Activated CD8-positive, alpha-beta memory T cell treated with anti-CD3 and anti-CD28 coated beads, Interleukin-2, amount 10 ng/mL, durations not matched to agents 7 days and 5 days (primary cell): ENCODE measurements at regions of chr22 and their contacts with region 1.

Region 1: GRCh38 chr22:30386960-30387827 is at the start of gene RNF215:
- DNase-seq: peak; percentile 82
- ATAC-seq: peak; percentile 91
- H3K4me3 Mint-ChIP-seq: peak within 1 kb of the TSS; percentile 76
- H3K27ac Mint-ChIP-seq: peak within 1 kb of the TSS; percentile 78
- H3K4me1 Mint-ChIP-seq: peaks cover 22% of the 10 kb centered on the region
- H3K27me3 Mint-ChIP-seq: no peaks in the 10 kb centered on the region
- total RNA-seq, gene RNF215: 8.5 to 10.5 TPM

Region 2: DNA sequence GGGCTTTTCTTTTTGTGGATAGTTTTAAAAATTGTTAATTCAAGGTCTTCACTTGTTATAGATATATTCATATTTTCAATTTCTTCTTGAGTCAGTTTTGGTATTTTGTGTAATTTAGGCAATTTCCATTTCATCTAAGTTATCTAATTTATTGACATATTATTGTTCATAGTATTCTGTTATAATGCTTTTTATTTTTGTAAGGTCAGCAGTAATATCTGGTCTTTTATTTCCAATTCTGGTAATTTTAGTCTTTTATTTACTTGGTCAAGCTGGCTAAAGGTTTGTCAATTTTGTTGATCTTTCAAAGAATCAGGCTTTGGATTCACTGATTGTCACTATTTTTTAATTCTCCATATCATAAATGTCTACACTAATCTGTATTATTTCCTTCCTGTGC is 246.8 kb before region 1 on chr22:
- CTCF ChIA-PET with region 1: no interaction called
- DNase-seq: no peak
- ATAC-seq: no peak
- H3K4me3 Mint-ChIP-seq: no peak overlapping the region
- H3K27ac Mint-ChIP-seq: no peak overlapping the region
- H3K4me1 Mint-ChIP-seq: no peaks in the 10 kb centered on the region
- H3K27me3 Mint-ChIP-seq: peaks cover 32% of the 10 kb centered on the region

Region 3: DNA sequence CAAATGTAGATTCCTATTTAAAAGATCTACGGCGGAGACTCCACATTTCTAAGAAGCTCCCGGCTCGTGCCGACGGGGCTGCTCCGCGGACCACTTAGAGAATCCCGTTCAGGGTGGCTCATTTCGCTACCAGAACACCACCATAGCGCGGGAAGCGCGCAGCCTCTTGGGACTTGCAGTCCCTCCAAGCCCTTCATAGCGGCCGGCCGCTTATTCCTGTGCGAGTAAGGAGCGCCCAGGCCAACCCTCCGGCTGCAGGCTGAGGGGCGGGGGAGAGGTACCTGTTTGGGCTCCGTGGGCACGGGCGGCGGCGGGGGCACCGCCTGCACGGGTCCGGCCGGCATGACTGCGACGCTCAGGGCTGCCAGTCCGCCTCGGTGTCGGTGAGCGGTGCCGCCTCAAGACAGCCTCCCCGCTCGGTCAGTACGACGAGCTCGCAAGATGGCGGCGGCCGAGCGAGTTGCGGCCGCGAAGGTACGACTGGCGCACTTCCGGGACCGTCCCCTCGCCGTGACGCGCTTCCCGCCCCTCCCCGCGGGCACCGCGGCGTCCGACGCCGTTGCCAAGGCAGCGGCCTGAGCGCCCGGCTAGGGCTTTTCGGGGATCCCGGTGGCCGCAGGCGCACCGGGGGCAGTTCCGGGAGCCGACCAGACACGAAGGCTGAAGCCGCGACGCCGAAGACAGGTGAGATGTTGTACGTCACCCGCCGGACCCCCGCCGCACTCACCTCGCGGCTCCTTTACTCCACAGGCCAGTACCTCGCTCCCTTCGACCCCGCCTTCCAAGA is 30.6 kb before region 1 on chr22 and contains the starts of genes CCDC157 and SF3A1:
- CTCF ChIA-PET with region 1: interaction called, 10 read pairs
- DNase-seq: peak; percentile 96
- ATAC-seq: peak; percentile 91
- H3K4me3 Mint-ChIP-seq: peak within 1 kb of the TSS; percentile 85
- H3K27ac Mint-ChIP-seq: peak within 1 kb of the TSS; percentile 91
- H3K4me1 Mint-ChIP-seq: peaks cover 43% of the 10 kb centered on the region
- H3K27me3 Mint-ChIP-seq: no peaks in the 10 kb centered on the region
- total RNA-seq, gene CCDC157: 4.9 to 6.2 TPM
- total RNA-seq, gene SF3A1: 214 to 267 TPM

Region 4: GRCh38 chr22:30402028-30402765 is 15.0 kb after region 1 on chr22:
- CTCF ChIA-PET with region 1: interaction called, 21 read pairs
- DNase-seq: no peak
- ATAC-seq: no peak
- H3K4me3 Mint-ChIP-seq: no peak overlapping the region
- H3K27ac Mint-ChIP-seq: no peak overlapping the region
- H3K4me1 Mint-ChIP-seq: peaks cover 13% of the 10 kb centered on the region
- H3K27me3 Mint-ChIP-seq: peaks cover 13% of the 10 kb centered on the region